Naive thymus-derived CD4-positive, alpha-beta T cell (primary cell): ENCODE measurements at regions of chr6 and their contacts with region 1.

Region 1: DNA sequence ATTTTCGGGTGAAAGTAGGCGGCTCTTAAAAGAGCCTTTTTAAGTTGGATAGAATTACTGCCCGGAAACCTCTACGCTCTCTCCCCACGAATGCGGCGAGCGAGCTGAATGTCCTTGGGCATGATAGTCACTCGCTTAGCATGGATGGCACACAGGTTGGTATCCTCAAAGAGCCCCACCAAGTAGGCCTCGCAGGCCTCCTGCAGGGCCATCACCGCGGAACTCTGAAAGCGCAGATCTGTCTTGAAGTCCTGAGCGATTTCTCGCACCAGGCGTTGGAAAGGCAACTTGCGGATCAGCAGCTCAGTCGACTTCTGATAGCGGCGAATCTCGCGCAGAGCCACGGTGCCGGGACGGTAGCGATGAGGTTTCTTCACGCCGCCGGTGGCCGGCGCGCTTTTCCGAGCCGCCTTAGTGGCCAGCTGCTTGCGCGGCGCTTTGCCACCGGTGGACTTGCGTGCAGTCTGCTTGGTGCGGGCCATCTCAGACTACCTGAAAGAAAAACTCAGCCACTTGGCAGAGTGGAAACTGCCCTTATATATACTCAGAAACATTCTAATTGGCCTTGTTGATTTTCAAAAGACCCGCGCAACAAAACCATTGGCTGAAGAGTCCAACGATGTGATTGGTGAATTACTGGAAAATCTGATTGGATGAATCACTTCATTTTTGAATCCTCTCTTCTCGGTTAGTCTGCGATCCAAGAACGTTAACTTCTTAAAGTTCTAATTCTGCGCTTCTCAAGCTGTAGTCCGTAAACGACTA is 93.9 kb upstream of the BTN3A2 start:
- DNase-seq: peak; percentile 50 to 89 (median 85)
- ATAC-seq: peak; percentile 24
- H3K4me3 ChIP-seq: peak overlapping the region; percentile 83
- H3K4me3 Mint-ChIP-seq: no peak overlapping the region
- H3K27ac ChIP-seq: peak overlapping the region; percentile 82
- H3K27ac Mint-ChIP-seq: peak overlapping the region in 2 of 9 donors; percentile 10 to 91
- H3K4me1 ChIP-seq: peaks cover 6 to 27% of the 10 kb centered on the region in 2 donors
- H3K4me1 Mint-ChIP-seq: peaks cover 0 to 34% (median 15%) of the 10 kb centered on the region in 7 donors
- H3K27me3 ChIP-seq: no peaks in the 10 kb centered on the region
- H3K27me3 Mint-ChIP-seq: no peaks in the 10 kb centered on the region

Region 2: GRCh38 chr6:25583099-25583498 is 688.0 kb before region 1 on chr6:
- CTCF ChIA-PET with region 1: no interaction called
- POLR2A ChIA-PET with region 1: no interaction called
- intact Hi-C with region 1: no loop called
- DNase-seq: no peak
- ATAC-seq: no peak
- H3K4me3 ChIP-seq: no peak overlapping the region
- H3K4me3 Mint-ChIP-seq: no peak overlapping the region
- H3K27ac ChIP-seq: no peak overlapping the region
- H3K27ac Mint-ChIP-seq: peak overlapping the region in 1 of 9 donors; percentile 4
- H3K4me1 ChIP-seq: peaks cover 0 to 8% of the 10 kb centered on the region in 2 donors
- H3K4me1 Mint-ChIP-seq: peaks cover 0 to 29% (median 15%) of the 10 kb centered on the region in 7 donors
- H3K27me3 ChIP-seq: no peaks in the 10 kb centered on the region
- H3K27me3 Mint-ChIP-seq: no peaks in the 10 kb centered on the region

Region 3: DNA sequence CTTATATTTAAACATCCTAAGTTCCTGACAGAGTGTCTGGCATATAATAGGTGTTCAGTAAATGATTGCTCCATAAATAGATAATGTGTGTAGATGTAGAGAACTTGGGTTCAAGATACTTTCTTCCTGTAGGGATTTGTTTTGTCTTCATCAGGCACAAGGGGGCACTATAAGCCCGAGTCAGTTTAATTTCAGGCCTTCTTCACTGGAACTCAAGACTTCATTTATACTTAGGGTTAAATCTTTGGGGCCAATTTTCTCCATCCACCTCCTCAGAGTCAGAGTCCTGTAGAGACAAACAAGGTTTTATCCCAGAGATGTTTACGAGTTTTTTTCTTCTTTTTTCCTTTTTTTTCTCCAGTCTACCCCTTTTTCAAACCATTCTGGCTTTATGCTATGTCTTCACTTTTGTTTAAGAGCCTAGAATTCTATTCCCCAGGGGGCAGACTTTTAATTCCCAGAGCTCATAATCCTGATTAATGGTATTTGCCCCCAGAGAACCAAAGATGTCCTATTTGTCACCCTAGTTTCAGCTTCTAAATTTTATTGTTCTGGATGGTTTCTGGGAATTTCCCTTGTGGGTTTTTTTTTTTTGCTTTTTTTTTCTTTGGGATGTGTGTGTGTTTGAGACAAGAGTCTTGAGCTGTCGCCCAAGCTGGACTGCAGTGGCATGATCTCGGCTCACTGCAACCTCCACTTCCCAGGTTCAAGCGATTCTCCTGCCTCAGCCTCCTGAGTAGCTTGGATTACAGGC is 95.5 kb before region 1 on chr6:
- CTCF ChIA-PET with region 1: interaction called, 6 read pairs
- POLR2A ChIA-PET with region 1: interaction called, 42 read pairs
- intact Hi-C with region 1: loop called (anchors 1 kb)
- DNase-seq: peak in 7 of 9 donors; percentile 57 to 75 (median 66)
- ATAC-seq: peak; percentile 32
- H3K4me3 ChIP-seq: no peak overlapping the region
- H3K4me3 Mint-ChIP-seq: peak overlapping the region in 7 of 10 donors; percentile 15 to 63 (median 43)
- H3K27ac ChIP-seq: no peak overlapping the region
- H3K27ac Mint-ChIP-seq: peak overlapping the region; percentile 32 to 89 (median 76)
- H3K4me1 ChIP-seq: peaks cover 16 to 19% of the 10 kb centered on the region in 2 donors
- H3K4me1 Mint-ChIP-seq: peaks cover 20 to 51% (median 39%) of the 10 kb centered on the region in 7 donors
- H3K27me3 ChIP-seq: no peaks in the 10 kb centered on the region
- H3K27me3 Mint-ChIP-seq: no peaks in the 10 kb centered on the region

Region 4: DNA sequence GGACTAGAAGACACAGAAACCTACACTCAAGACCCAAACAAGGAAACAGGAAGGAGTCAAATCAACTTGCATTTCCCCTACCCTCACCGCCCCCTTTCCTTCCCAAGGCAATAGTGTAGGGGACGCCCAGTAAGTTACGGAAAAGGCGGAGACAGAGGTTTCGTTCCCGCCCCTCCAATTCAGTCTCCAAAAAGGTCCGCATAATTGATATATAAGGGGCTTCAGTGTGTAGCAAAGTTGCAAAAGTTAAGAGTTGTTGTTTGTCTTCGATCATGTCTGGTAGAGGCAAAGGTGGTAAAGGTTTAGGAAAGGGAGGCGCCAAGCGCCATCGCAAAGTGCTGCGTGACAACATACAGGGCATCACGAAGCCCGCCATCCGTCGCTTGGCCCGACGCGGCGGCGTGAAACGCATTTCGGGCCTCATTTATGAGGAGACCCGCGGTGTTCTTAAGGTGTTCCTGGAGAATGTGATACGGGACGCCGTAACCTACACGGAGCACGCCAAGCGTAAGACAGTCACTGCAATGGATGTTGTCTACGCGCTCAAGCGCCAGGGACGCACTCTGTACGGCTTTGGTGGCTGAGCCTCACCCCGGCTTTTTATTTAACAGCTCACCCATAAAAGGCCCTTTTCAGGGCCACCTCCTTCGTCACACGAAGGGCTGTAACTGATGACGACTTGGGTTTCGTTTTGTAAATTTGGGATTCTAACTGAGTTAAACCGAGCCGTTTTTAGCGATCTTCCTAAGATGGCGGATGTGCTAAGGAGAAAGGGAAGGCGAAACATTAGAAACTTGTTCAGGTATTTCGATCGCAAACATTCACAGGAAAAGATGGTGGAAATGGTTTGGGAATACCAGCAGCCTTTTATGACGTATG is 30.7 kb before region 1 on chr6:
- CTCF ChIA-PET with region 1: interaction called, 4 read pairs
- POLR2A ChIA-PET with region 1: interaction called, 402 read pairs
- intact Hi-C with region 1: loop called (anchors 1 kb)
- DNase-seq: peak; percentile 56 to 90 (median 78)
- ATAC-seq: peak; percentile 87
- H3K4me3 ChIP-seq: peak overlapping the region; percentile 55
- H3K4me3 Mint-ChIP-seq: peak overlapping the region; percentile 80 to 93 (median 89)
- H3K27ac ChIP-seq: peak overlapping the region; percentile 83
- H3K27ac Mint-ChIP-seq: peak overlapping the region; percentile 89 to 99 (median 96)
- H3K4me1 ChIP-seq: peaks cover 6 to 11% of the 10 kb centered on the region in 2 donors
- H3K4me1 Mint-ChIP-seq: peaks cover 8 to 37% (median 25%) of the 10 kb centered on the region in 7 donors
- H3K27me3 ChIP-seq: no peaks in the 10 kb centered on the region
- H3K27me3 Mint-ChIP-seq: no peaks in the 10 kb centered on the region

Region 5: GRCh38 chr6:26312501-26313390 is 41.7 kb after region 1 on chr6:
- CTCF ChIA-PET with region 1: no interaction called
- POLR2A ChIA-PET with region 1: interaction called, 37 read pairs
- intact Hi-C with region 1: loop called (anchors 1 to 5 kb)
- DNase-seq: peak; percentile 64 to 91 (median 86)
- ATAC-seq: peak; percentile 75
- H3K4me3 ChIP-seq: peak overlapping the region; percentile 81
- H3K4me3 Mint-ChIP-seq: peak overlapping the region; percentile 83 to 100 (median 96)
- H3K27ac ChIP-seq: peak overlapping the region; percentile 55
- H3K27ac Mint-ChIP-seq: peak overlapping the region; percentile 82 to 100 (median 96)
- H3K4me1 ChIP-seq: peaks cover 4 to 19% of the 10 kb centered on the region in 2 donors
- H3K4me1 Mint-ChIP-seq: peaks cover 5 to 51% (median 37%) of the 10 kb centered on the region in 7 donors
- H3K27me3 ChIP-seq: no peaks in the 10 kb centered on the region
- H3K27me3 Mint-ChIP-seq: peaks cover 0 to 8% (median 0%) of the 10 kb centered on the region in 5 donors

Region 6: GRCh38 chr6:26501482-26501986 is 230.4 kb after region 1 on chr6:
- CTCF ChIA-PET with region 1: no interaction called
- POLR2A ChIA-PET with region 1: no interaction called
- intact Hi-C with region 1: no loop called
- DNase-seq: peak in 8 of 9 donors; percentile 25 to 39 (median 33)
- ATAC-seq: peak; percentile 79
- H3K4me3 ChIP-seq: peak overlapping the region; percentile 51
- H3K4me3 Mint-ChIP-seq: peak overlapping the region; percentile 63 to 87 (median 84)
- H3K27ac ChIP-seq: no peak overlapping the region
- H3K27ac Mint-ChIP-seq: peak overlapping the region in 7 of 9 donors; percentile 5 to 41 (median 25)
- H3K4me1 ChIP-seq: peaks cover 10% of the 10 kb centered on the region in 2 donors
- H3K4me1 Mint-ChIP-seq: peaks cover 10 to 22% (median 17%) of the 10 kb centered on the region in 7 donors
- H3K27me3 ChIP-seq: peaks cover 13 to 15% of the 10 kb centered on the region in 2 donors
- H3K27me3 Mint-ChIP-seq: peaks cover 11 to 48% (median 27%) of the 10 kb centered on the region in 5 donors

Region 7: DNA sequence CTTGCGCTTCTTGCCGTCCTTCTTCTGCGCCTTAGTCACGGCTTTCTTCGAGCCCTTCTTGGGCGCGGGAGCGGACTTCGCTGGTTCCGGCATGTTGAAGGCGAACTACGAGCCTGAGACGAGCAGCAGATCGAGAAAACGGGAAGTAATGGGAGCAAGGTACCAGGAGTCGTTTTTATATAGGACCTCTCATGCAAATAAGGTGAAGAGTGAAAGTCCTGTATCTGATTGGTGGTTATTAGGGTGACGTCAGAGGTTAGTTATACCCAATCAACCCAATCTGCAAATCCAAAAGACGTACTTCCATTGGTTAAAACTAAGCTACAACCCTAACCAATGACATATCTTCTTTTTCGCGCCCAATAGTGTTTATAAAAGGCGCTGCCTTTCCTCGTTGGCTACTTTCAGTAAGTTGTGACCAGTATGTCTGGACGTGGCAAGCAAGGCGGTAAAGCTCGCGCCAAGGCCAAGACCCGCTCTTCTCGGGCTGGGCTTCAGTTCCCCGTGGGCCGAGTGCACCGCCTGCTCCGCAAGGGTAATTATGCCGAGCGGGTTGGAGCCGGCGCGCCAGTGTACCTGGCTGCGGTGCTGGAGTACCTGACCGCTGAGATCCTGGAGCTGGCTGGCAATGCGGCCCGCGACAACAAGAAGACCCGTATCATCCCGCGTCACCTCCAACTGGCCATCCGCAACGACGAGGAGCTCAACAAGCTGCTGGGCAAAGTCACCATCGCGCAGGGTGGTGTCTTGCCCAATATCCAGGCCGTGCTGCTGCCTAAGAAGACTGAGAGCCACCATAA is 875.8 kb after region 1 on chr6:
- CTCF ChIA-PET with region 1: no interaction called
- POLR2A ChIA-PET with region 1: interaction called, 29 read pairs
- intact Hi-C with region 1: loop called in 1 of 2 experiments (anchors 2 kb)
- DNase-seq: peak; percentile 71 to 96 (median 92)
- ATAC-seq: peak; percentile 92
- H3K4me3 ChIP-seq: peak overlapping the region; percentile 90
- H3K4me3 Mint-ChIP-seq: no peak overlapping the region
- H3K27ac ChIP-seq: peak overlapping the region; percentile 89
- H3K27ac Mint-ChIP-seq: no peak overlapping the region
- H3K4me1 ChIP-seq: peaks cover 6 to 7% of the 10 kb centered on the region in 2 donors
- H3K4me1 Mint-ChIP-seq: peaks cover 0 to 26% (median 14%) of the 10 kb centered on the region in 7 donors
- H3K27me3 ChIP-seq: no peaks in the 10 kb centered on the region
- H3K27me3 Mint-ChIP-seq: no peaks in the 10 kb centered on the region

Region 8: GRCh38 chr6:27541212-27541931 is 1270.3 kb after region 1 on chr6:
- CTCF ChIA-PET with region 1: no interaction called
- POLR2A ChIA-PET with region 1: no interaction called
- intact Hi-C with region 1: no loop called
- DNase-seq: no peak
- ATAC-seq: no peak
- H3K4me3 ChIP-seq: no peak overlapping the region
- H3K4me3 Mint-ChIP-seq: no peak overlapping the region
- H3K27ac ChIP-seq: no peak overlapping the region
- H3K27ac Mint-ChIP-seq: no peak overlapping the region
- H3K4me1 ChIP-seq: peaks cover 0 to 5% of the 10 kb centered on the region in 2 donors
- H3K4me1 Mint-ChIP-seq: peaks cover 0 to 15% (median 14%) of the 10 kb centered on the region in 7 donors
- H3K27me3 ChIP-seq: peaks cover 17 to 49% of the 10 kb centered on the region in 2 donors
- H3K27me3 Mint-ChIP-seq: peaks cover 83 to 94% (median 86%) of the 10 kb centered on the region in 5 donors